ENCODE measurements at regions of chrX and their contacts with region 1.

Region 1: GRCh38 chrX:153470435-153471363 is at the start of gene HAUS7:
- DNase-seq: peak; percentile 73 to 94 (median 87)
- ATAC-seq: peak; percentile 84
- H3K4me3 ChIP-seq: peak within 1 kb of the TSS; percentile 65 to 83
- H3K4me3 Mint-ChIP-seq: peak within 1 kb of the TSS; percentile 84
- H3K27ac ChIP-seq: peak within 1 kb of the TSS; percentile 66 to 70
- H3K27ac Mint-ChIP-seq: peak within 1 kb of the TSS; percentile 77
- H3K4me1 ChIP-seq: peaks cover 18% of the 10 kb centered on the region
- H3K4me1 Mint-ChIP-seq: peaks cover 22% of the 10 kb centered on the region
- H3K27me3 ChIP-seq: no peaks in the 10 kb centered on the region
- H3K27me3 Mint-ChIP-seq: no peaks in the 10 kb centered on the region
- CTCF ChIP-seq: peak; percentile 32
- total RNA-seq, gene HAUS7: 20.5 to 20.6 TPM

Region 2: DNA sequence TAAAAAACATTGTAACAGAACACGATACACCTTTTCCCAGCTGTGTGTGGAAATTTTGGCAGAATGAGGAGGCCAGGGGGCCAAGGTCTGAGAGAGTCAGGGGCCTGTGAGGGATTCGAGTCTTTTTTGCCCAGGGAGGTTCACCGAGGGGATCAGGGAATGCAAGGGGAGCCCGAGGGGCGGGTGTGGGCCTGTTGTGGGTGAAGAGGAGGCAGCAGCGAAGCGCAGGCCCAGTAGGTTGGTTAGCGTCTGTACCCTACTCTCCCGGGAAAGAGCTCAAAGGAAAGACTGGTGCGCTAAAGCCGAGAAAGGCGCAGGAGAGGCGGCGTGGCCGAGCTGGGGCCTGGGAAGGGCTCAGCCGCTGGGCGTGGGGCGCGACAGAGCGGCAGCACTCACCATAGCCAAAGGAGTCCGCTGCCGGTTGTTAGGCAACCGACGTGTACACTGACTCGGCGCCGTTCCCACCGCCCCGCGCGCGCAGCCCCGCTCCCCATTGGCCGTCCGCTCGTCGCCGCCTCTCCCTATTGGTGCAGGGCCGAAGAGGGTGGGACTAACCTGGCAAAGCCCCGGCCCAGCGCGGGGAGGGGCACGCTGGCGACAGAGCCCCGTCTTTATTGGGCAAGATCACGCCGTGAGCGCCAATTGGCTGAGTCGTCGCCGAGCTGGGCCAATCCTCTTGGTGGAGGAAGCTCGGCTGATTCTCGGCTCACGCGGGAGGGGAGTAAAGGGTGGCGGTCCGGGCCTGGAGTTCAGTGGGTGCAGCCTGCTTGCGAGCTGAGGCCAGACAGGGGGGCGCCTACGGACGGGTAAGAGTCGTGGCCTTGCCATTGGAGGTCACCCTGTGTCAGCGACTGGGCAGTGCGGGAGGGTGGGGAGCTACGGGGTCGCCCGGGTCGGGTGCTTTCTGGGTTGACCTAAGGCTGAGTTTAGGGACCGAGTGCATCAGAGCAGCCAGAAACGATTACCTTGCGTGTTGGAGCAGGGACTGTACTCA is 640.1 kb before region 1 on chrX and contains the starts of genes CETN2 and NSDHL:
- CTCF ChIA-PET with region 1: no interaction called
- POLR2A ChIA-PET with region 1: no interaction called
- intact Hi-C with region 1: loop called (anchors 5 kb)
- DNase-seq: peak; percentile 87 to 95 (median 92)
- ATAC-seq: peak; percentile 97
- H3K4me3 ChIP-seq: peak within 1 kb of the TSS; percentile 71 to 85
- H3K4me3 Mint-ChIP-seq: peak within 1 kb of the TSS; percentile 96
- H3K27ac ChIP-seq: peak within 1 kb of the TSS; percentile 82 to 88
- H3K27ac Mint-ChIP-seq: peak within 1 kb of the TSS; percentile 91
- H3K4me1 ChIP-seq: peaks cover 18% of the 10 kb centered on the region
- H3K4me1 Mint-ChIP-seq: peaks cover 32% of the 10 kb centered on the region
- H3K27me3 ChIP-seq: no peaks in the 10 kb centered on the region
- H3K27me3 Mint-ChIP-seq: no peaks in the 10 kb centered on the region
- CTCF ChIP-seq: no peak
- total RNA-seq, gene CETN2: 3.9 to 4.9 TPM
- total RNA-seq, gene NSDHL: 3.3 to 3.6 TPM

Region 3: GRCh38 chrX:153032397-153033118 is 438.1 kb before region 1 on chrX:
- CTCF ChIA-PET with region 1: interaction called, 3 read pairs
- POLR2A ChIA-PET with region 1: interaction called, 5 read pairs
- intact Hi-C with region 1: loop called in 1 of 2 experiments (anchors 1 kb)
- DNase-seq: peak; percentile 33 to 80 (median 64)
- ATAC-seq: peak; percentile 73
- H3K4me3 ChIP-seq: peak overlapping the region; percentile 50 to 52
- H3K4me3 Mint-ChIP-seq: peak overlapping the region; percentile 86
- H3K27ac ChIP-seq: peak overlapping the region; percentile 42 to 51
- H3K27ac Mint-ChIP-seq: peak overlapping the region; percentile 91
- H3K4me1 ChIP-seq: peaks cover 10% of the 10 kb centered on the region
- H3K4me1 Mint-ChIP-seq: peaks cover 17% of the 10 kb centered on the region
- H3K27me3 ChIP-seq: no peaks in the 10 kb centered on the region
- H3K27me3 Mint-ChIP-seq: no peaks in the 10 kb centered on the region
- CTCF ChIP-seq: peak; percentile 66

Region 4: GRCh38 chrX:153507484-153508178 is 36.9 kb after region 1 on chrX:
- CTCF ChIA-PET with region 1: interaction called, 36 read pairs
- POLR2A ChIA-PET with region 1: interaction called, 3 read pairs
- intact Hi-C with region 1: loop called (anchors 1 kb)
- DNase-seq: peak; percentile 68 to 92 (median 82)
- ATAC-seq: peak; percentile 99
- H3K4me3 ChIP-seq: no peak overlapping the region
- H3K4me3 Mint-ChIP-seq: no peak overlapping the region
- H3K27ac ChIP-seq: no peak overlapping the region
- H3K27ac Mint-ChIP-seq: no peak overlapping the region
- H3K4me1 ChIP-seq: peaks cover 5% of the 10 kb centered on the region
- H3K4me1 Mint-ChIP-seq: no peaks in the 10 kb centered on the region
- H3K27me3 ChIP-seq: no peaks in the 10 kb centered on the region
- H3K27me3 Mint-ChIP-seq: no peaks in the 10 kb centered on the region
- CTCF ChIP-seq: peak; percentile 62

Region 5: DNA sequence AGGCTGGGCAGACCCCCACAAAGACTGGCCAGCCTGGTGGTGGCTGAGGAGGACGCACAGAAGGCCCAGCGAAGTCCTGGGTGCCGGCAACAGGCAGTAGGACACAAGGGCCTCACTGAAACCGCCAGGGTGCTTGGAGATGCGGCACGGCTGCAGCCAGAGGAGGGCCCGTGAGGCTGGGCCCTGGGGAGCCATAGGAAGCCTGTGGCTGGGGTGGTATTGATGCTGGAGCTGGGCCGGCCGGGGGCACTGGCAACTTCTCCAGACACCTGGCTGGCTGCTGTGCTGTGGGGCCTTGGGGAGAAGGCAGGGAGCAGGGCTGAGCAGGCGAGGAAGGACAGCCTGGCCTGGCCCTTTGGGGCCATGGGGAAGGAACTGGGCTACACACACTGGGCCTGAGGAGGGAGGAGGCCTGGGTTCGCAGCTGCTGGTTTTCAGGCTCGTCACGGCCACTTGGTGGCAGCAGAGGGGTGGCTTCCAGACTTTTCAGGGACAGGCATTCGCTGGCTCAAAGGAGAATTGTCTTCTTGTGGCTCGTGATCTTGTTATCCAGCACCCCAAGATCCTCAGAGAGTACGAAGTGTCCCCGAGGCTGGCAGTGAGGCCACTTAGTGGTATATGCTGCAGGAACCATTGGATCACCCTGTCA is 83.9 kb after region 1 on chrX:
- CTCF ChIA-PET with region 1: no interaction called
- POLR2A ChIA-PET with region 1: no interaction called
- intact Hi-C with region 1: no loop called
- DNase-seq: peak; percentile 22 to 73 (median 60)
- ATAC-seq: peak; percentile 64
- H3K4me3 ChIP-seq: no peak overlapping the region
- H3K4me3 Mint-ChIP-seq: no peak overlapping the region
- H3K27ac ChIP-seq: no peak overlapping the region
- H3K27ac Mint-ChIP-seq: no peak overlapping the region
- H3K4me1 ChIP-seq: peaks cover 2% of the 10 kb centered on the region
- H3K4me1 Mint-ChIP-seq: no peaks in the 10 kb centered on the region
- H3K27me3 ChIP-seq: no peaks in the 10 kb centered on the region
- H3K27me3 Mint-ChIP-seq: no peaks in the 10 kb centered on the region
- CTCF ChIP-seq: peak; percentile 48

Region 6: DNA sequence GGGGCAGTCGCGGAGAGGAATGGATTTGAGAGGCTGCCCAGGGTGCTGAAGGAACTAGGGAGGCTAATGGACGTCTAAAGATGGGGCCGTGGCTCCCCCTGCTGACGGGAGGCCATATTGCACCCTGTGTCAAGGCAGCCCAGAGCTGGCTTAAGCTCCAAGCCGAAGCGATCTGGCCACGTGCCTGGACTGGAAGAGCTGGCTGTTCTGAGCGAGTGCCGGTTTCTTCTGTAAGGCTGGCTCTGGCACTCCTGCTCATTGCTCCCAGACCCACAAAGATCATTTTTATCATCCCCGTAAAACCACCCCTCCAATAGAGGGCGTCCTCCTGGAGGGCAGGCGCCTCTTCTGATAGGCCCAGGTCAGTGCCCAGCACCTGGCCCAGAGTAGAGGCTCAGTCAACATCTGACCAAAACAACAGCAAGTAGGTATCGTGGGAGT is 197.3 kb after region 1 on chrX:
- CTCF ChIA-PET with region 1: no interaction called
- POLR2A ChIA-PET with region 1: no interaction called
- intact Hi-C with region 1: loop called in 1 of 2 experiments (anchors 10 kb)
- DNase-seq: peak; percentile 56 to 83 (median 74)
- ATAC-seq: peak; percentile 92
- H3K4me3 ChIP-seq: peak overlapping the region in 1 of 2 experiments; percentile 8
- H3K4me3 Mint-ChIP-seq: peak overlapping the region; percentile 68
- H3K27ac ChIP-seq: no peak overlapping the region
- H3K27ac Mint-ChIP-seq: no peak overlapping the region
- H3K4me1 ChIP-seq: no peaks in the 10 kb centered on the region
- H3K4me1 Mint-ChIP-seq: peaks cover 7% of the 10 kb centered on the region
- H3K27me3 ChIP-seq: no peaks in the 10 kb centered on the region
- H3K27me3 Mint-ChIP-seq: peaks cover 13% of the 10 kb centered on the region
- CTCF ChIP-seq: peak; percentile 64